Activated B cell treated with CpG ODN at 0.5 μM for 24 hours (primary cell): ENCODE measurements at regions of chr1 and their contacts with region 1.

Region 1: GRCh38 chr1:182861994-182862393 is 22.8 kb downstream of the DHX9 start:
- DNase-seq: no peak
- ATAC-seq: no peak
- H3K4me3 Mint-ChIP-seq: no peak overlapping the region
- H3K27ac Mint-ChIP-seq: no peak overlapping the region
- H3K4me1 Mint-ChIP-seq: no peaks in the 10 kb centered on the region
- H3K27me3 Mint-ChIP-seq: no peaks in the 10 kb centered on the region
- CTCF ChIP-seq: no peak

Region 2: DNA sequence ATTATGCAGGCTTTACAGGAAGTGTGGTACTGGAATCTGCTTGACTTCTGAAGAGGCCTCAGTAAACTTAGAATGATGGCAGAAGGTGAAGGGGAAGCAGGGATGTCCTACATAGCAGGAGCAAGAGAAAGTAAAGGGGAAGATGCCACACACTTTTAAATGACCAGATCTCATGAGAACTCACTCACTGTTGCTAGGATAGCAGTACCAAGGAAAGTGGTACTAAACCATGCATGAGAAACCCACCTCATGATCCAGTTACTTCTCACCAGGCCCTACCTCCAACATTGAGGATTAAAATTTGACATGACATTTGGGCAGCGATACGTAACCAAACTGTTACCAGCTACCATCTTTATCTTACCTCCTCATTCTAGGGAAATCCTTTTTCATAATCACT is 13.3 kb before region 1 on chr1:
- CTCF ChIA-PET with region 1: no interaction called
- POLR2A ChIA-PET with region 1: no interaction called
- intact Hi-C with region 1: loop called (anchors 2 kb)
- DNase-seq: no peak
- ATAC-seq: no peak
- H3K4me3 Mint-ChIP-seq: no peak overlapping the region
- H3K27ac Mint-ChIP-seq: no peak overlapping the region
- H3K4me1 Mint-ChIP-seq: peaks cover 24% of the 10 kb centered on the region
- H3K27me3 Mint-ChIP-seq: no peaks in the 10 kb centered on the region
- CTCF ChIP-seq: no peak

Region 3: GRCh38 chr1:182877842-182878241 is 15.8 kb after region 1 on chr1:
- CTCF ChIA-PET with region 1: no interaction called
- POLR2A ChIA-PET with region 1: no interaction called
- intact Hi-C with region 1: loop called (anchors 2 kb)
- DNase-seq: no peak
- ATAC-seq: no peak
- H3K4me3 Mint-ChIP-seq: no peak overlapping the region
- H3K27ac Mint-ChIP-seq: no peak overlapping the region
- H3K4me1 Mint-ChIP-seq: no peaks in the 10 kb centered on the region
- H3K27me3 Mint-ChIP-seq: no peaks in the 10 kb centered on the region
- CTCF ChIP-seq: no peak

Region 4: DNA sequence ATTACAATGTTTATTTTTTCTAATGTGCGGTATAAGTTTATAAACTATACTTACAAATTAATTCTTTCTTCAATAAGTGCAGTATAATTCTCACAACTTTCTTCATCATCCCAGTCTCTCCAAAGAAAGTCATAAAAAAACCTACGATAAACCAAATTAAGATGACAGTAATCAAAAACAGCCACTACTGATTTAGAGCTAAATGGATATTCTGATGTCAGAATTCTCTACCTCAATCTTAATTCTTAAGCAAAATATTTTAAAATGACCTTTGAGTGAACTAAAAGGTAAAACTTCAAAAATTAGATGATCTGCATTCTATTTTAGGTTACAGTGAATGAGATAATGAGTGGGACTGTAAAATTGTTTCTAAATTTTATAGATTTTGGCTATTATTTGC is 77.4 kb after region 1 on chr1:
- CTCF ChIA-PET with region 1: no interaction called
- POLR2A ChIA-PET with region 1: no interaction called
- intact Hi-C with region 1: no loop called
- DNase-seq: no peak
- ATAC-seq: no peak
- H3K4me3 Mint-ChIP-seq: no peak overlapping the region
- H3K27ac Mint-ChIP-seq: no peak overlapping the region
- H3K4me1 Mint-ChIP-seq: no peaks in the 10 kb centered on the region
- H3K27me3 Mint-ChIP-seq: peaks cover 15% of the 10 kb centered on the region
- CTCF ChIP-seq: no peak